Activated CD4-positive, alpha-beta memory T cell treated with anti-CD3 and anti-CD28 coated beads, Interleukin-2, amount 10 ng/mL, durations not matched to agents 7 days and 5 days (primary cell): ENCODE measurements at regions of chr1 and their contacts with region 1.

Region 1: GRCh38 chr1:39196244-39197215 is 8.0 kb upstream of the MACF1 start:
- DNase-seq: peak; percentile 73
- H3K4me3 Mint-ChIP-seq: peak overlapping the region; percentile 67
- H3K27ac Mint-ChIP-seq: peak overlapping the region; percentile 99
- H3K4me1 Mint-ChIP-seq: peaks cover 76% of the 10 kb centered on the region
- H3K27me3 Mint-ChIP-seq: no peaks in the 10 kb centered on the region

Region 2: DNA sequence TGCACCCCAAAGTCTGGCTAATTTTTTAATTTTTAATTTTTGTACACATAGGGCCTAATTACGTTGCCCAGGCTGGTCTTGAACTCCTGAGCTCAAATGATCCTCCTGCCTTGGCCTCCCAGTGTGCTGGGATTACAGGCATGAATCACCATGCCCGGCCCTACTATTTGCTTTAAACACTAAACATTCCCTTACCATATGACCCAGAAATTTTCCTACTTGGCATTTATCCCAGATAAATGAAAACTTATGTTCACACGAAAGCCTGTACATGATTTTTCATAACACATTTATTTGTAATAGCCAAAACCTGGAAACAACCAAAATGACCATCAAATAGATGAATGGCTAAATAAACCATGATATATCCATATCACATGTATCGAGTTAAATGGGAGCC is 134.6 kb before region 1 on chr1:
- CTCF ChIA-PET with region 1: no interaction called
- POLR2A ChIA-PET with region 1: no interaction called
- DNase-seq: no peak
- H3K4me3 Mint-ChIP-seq: no peak overlapping the region
- H3K27ac Mint-ChIP-seq: no peak overlapping the region
- H3K4me1 Mint-ChIP-seq: no peaks in the 10 kb centered on the region
- H3K27me3 Mint-ChIP-seq: no peaks in the 10 kb centered on the region

Region 3: DNA sequence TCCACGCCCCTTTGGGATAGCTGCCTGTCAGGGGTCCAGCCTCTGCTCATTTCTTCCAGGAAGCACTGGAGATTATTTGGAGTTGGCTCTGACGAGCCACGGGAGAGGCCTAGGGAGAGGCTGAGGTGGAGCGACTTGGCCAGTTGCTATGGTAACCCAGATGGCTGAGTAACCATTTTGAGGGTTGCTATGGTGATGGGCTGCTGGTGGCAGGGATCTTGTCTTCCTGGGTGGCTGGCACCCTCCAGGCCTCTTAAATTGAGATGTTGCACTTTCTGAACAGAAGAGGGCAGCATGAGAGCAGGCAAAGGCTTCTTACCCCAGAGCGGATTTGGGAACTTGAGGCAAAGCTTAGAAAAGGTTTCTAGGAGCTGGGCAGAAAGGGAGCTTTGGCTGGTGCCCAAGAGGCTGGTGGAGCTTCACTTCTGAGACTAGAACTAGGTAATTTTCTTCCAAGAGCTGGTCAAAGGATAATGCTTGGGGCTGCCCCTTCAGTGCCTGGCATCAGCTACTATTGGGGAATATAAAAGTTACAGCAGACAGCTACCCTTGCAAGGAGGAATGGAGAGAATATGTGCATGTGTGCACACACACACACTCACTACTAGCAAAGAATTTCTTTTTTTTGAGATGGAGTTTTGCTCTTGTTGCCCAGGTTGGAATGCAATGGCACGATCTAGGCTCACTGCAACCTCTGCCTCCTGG is 97.8 kb before region 1 on chr1:
- CTCF ChIA-PET with region 1: interaction called, 71 read pairs
- POLR2A ChIA-PET with region 1: interaction called, 6 read pairs
- DNase-seq: peak; percentile 71
- H3K4me3 Mint-ChIP-seq: no peak overlapping the region
- H3K27ac Mint-ChIP-seq: no peak overlapping the region
- H3K4me1 Mint-ChIP-seq: peaks cover 22% of the 10 kb centered on the region
- H3K27me3 Mint-ChIP-seq: peaks cover 3% of the 10 kb centered on the region

Region 4: GRCh38 chr1:39183503-39184353 is 12.8 kb before region 1 on chr1:
- CTCF ChIA-PET with region 1: interaction called, 28 read pairs
- POLR2A ChIA-PET with region 1: interaction called, 33 read pairs
- DNase-seq: peak; percentile 84
- H3K4me3 Mint-ChIP-seq: no peak overlapping the region
- H3K27ac Mint-ChIP-seq: peak overlapping the region; percentile 88
- H3K4me1 Mint-ChIP-seq: peaks cover 50% of the 10 kb centered on the region
- H3K27me3 Mint-ChIP-seq: no peaks in the 10 kb centered on the region

Region 5: DNA sequence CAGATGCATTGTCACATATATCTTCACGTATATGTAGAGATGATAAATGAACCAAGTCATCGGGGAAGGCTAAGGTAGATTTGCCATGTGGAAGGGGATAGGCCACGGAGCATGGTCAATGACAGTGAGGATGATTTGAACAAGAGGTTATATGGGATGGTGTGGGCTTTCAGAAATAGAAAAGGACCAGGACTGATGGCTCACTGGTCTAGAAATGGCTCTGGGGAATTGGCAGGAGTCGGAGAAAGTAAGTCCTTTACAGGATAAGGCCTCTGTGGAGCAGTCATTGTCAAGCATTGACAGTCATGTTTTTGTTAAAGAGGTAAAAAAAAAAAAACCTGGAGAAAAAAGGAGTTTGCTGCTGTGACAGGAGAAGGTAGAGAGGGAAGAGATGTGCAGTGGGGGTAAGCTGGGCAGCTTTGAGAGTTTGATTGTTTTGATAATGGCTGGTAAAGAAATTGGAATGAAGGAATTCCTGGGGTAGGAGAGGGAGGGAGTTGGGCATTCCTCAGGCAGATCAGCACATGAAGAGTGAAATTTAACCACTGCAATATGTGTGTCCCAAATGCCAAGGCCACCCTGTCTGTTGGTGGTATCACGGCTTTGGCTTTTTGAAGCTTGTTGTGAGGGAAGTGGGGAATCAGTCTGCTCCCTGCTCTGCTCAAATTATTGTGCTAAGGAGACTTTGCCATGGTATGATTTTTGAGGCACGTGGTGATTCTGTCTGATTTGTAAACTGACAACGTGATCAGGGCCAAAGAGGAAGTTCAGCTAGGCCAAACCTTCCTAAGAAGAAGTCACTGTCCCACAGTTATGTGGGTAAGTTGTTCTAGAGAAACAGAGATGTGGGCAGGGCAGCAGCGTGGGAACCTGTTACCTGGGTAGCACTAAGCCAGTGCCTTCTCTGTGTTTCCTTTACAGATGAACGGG is 34.0 kb after region 1 on chr1:
- CTCF ChIA-PET with region 1: interaction called, 20 read pairs
- POLR2A ChIA-PET with region 1: interaction called, 8 read pairs
- DNase-seq: peak; percentile 31
- H3K4me3 Mint-ChIP-seq: no peak overlapping the region
- H3K27ac Mint-ChIP-seq: peak overlapping the region; percentile 66
- H3K4me1 Mint-ChIP-seq: peaks cover 49% of the 10 kb centered on the region
- H3K27me3 Mint-ChIP-seq: no peaks in the 10 kb centered on the region

Region 6: DNA sequence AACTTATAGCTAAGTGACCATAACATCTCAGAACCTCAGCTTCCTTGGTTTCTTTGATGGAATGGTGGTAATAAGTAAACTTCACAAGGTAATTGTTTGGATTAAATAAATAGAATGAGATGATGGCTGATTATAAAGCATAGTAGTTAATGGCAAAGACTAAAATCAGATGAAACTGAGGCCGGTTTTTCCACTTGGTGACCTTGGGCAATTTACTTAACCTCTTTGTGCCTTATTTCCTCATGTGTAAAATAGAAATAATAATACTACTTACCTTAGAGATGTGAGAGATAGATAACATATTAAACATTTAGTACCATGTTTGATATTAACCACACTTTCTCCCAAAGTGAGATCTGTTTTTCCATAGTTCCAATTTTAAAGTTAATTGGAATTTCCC is 52.6 kb after region 1 on chr1:
- CTCF ChIA-PET with region 1: interaction called, 24 read pairs
- POLR2A ChIA-PET with region 1: interaction called, 4 read pairs
- DNase-seq: no peak
- H3K4me3 Mint-ChIP-seq: no peak overlapping the region
- H3K27ac Mint-ChIP-seq: no peak overlapping the region
- H3K4me1 Mint-ChIP-seq: peaks cover 17% of the 10 kb centered on the region
- H3K27me3 Mint-ChIP-seq: no peaks in the 10 kb centered on the region

Region 7: DNA sequence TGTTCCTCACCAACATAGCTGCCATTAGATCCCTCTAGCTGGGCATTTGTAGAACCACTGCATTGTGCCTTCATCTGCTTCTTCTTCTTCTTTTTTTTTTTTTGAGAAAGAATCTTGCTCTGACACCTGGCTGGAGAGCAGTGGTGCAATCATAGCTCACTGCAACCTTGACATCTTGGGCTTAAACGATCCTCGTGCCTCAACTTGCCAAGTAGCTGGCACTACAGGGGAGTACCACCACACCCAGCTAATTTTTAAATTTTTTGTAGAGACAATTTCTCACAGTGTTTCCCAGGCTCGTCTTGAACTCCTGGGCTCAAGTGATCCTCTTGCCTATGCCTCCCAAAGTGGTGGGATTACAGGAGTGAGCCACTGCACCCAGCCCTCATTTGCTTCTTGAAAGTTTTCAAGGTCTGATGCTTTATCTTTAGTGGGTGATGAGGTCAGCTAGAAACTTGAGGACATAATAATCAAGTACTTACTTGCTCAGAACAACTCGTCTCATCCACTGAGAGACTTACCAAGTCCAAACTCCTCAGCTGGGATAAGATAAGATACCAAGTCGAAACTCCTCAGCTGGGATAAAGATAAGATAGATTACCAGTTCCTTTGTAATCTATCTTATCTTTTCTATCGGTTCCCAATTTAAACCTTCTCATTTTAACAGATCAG is 79.4 kb after region 1 on chr1:
- CTCF ChIA-PET with region 1: interaction called, 10 read pairs
- POLR2A ChIA-PET with region 1: interaction called, 5 read pairs
- DNase-seq: no peak
- H3K4me3 Mint-ChIP-seq: no peak overlapping the region
- H3K27ac Mint-ChIP-seq: no peak overlapping the region
- H3K4me1 Mint-ChIP-seq: peaks cover 31% of the 10 kb centered on the region
- H3K27me3 Mint-ChIP-seq: no peaks in the 10 kb centered on the region

Region 8: GRCh38 chr1:39609618-39610331 is 413.2 kb after region 1 on chr1:
- CTCF ChIA-PET with region 1: no interaction called
- POLR2A ChIA-PET with region 1: no interaction called
- DNase-seq: peak; percentile 65
- H3K4me3 Mint-ChIP-seq: no peak overlapping the region
- H3K27ac Mint-ChIP-seq: no peak overlapping the region
- H3K4me1 Mint-ChIP-seq: peaks cover 7% of the 10 kb centered on the region
- H3K27me3 Mint-ChIP-seq: peaks cover 11% of the 10 kb centered on the region